ENCODE measurements at regions of chr18 and their contacts with region 1.

Region 1: GRCh38 chr18:55405893-55406406 is 182.0 kb downstream of the TCF4 start:
- DNase-seq: peak; percentile 97
- H3K4me3 ChIP-seq: no peak overlapping the region
- H3K27ac ChIP-seq: peak overlapping the region; percentile 73
- H3K4me1 ChIP-seq: peaks cover 48% of the 10 kb centered on the region
- H3K27me3 ChIP-seq: no peaks in the 10 kb centered on the region
- CTCF ChIP-seq: peak in 1 of 2 donors; percentile 20
- POLR2A ChIP-seq: no peak

Region 2: GRCh38 chr18:55110436-55110835 is 295.5 kb before region 1 on chr18:
- CTCF ChIA-PET with region 1: no interaction called
- POLR2A ChIA-PET with region 1: no interaction called
- dilution Hi-C with region 1: no loop called
- intact Hi-C with region 1: loop called (anchors 1 kb)
- DNase-seq: peak; percentile 73
- H3K4me3 ChIP-seq: no peak overlapping the region
- H3K27ac ChIP-seq: peak overlapping the region; percentile 90
- H3K4me1 ChIP-seq: peaks cover 23% of the 10 kb centered on the region
- H3K27me3 ChIP-seq: no peaks in the 10 kb centered on the region
- CTCF ChIP-seq: no peak
- POLR2A ChIP-seq: peak; percentile 35

Region 3: DNA sequence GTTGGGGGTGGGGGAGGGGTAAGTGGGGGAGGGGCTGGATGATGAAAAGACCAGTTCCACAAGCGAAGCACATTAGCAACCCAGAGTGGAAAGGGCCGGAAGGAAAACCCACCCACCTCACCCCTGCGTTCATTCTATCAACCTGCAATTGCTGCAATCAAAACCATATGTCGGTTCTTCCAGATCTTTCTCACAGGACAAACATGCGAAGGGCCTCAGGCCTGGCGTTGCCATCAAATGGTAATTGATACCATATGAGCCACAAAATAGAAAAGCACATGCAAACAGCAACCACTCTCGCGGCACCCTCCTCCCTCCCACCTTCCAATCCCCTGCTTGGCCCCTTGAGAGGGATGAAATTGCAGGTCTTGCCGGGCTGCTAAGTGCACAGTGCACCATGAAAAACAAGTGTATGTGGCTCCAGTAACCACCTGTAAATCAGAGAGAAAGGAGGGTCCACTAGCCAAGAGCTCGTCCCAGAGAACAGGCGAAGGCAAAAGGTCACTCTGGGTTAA is 105.5 kb before region 1 on chr18:
- CTCF ChIA-PET with region 1: no interaction called
- POLR2A ChIA-PET with region 1: no interaction called
- dilution Hi-C with region 1: no loop called
- intact Hi-C with region 1: no loop called
- DNase-seq: no peak
- H3K4me3 ChIP-seq: no peak overlapping the region
- H3K27ac ChIP-seq: no peak overlapping the region
- H3K4me1 ChIP-seq: no peaks in the 10 kb centered on the region
- H3K27me3 ChIP-seq: no peaks in the 10 kb centered on the region
- CTCF ChIP-seq: no peak
- POLR2A ChIP-seq: no peak

Region 4: GRCh38 chr18:55322178-55322735 is 83.7 kb before region 1 on chr18:
- CTCF ChIA-PET with region 1: interaction called, 10 read pairs
- POLR2A ChIA-PET with region 1: interaction called, 7 read pairs
- dilution Hi-C with region 1: no loop called
- intact Hi-C with region 1: loop called (anchors 1 kb)
- DNase-seq: peak; percentile 96
- H3K4me3 ChIP-seq: peak overlapping the region; percentile 28 to 89 (median 52)
- H3K27ac ChIP-seq: peak overlapping the region; percentile 82
- H3K4me1 ChIP-seq: peaks cover 66% of the 10 kb centered on the region
- H3K27me3 ChIP-seq: no peaks in the 10 kb centered on the region
- CTCF ChIP-seq: peak; percentile 4 to 20
- POLR2A ChIP-seq: no peak

Region 5: DNA sequence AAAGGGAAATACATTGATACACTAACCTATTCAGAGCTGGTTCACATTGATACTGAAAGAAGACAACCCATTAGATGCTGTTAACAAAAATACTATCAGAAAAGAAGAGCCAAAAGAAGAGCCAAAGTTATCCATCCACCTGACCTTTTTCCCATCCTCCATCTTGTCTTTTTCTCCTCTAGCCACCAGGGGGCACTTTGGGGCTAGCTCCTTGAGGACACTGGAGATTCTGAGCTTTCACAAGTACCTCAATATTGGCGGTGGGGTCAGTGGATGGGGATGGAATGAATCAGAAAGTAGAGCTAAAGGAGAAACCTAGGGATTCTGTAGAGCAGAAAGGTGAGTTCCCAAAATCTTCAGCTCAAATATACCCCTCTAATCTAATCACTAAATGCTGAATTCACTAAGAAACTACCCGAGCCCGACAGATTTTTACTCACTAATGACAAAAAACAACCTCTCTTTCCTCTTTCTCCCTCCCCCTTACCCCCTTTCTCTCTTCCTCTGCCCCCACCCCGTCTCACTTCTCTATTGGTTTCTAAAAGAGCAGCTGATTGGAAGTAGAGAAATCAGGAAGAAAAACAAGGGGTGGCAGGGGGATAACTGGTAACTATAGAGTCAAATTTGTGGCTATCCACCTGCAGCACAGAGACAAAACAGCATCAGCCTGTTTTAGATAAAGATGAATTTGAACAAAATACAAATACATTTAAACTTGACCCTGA is 21.2 kb before region 1 on chr18:
- CTCF ChIA-PET with region 1: interaction called, 15 read pairs
- POLR2A ChIA-PET with region 1: interaction called, 11 read pairs
- dilution Hi-C with region 1: no loop called
- intact Hi-C with region 1: loop called (anchors 1 kb)
- DNase-seq: peak; percentile 67
- H3K4me3 ChIP-seq: no peak overlapping the region
- H3K27ac ChIP-seq: no peak overlapping the region
- H3K4me1 ChIP-seq: peaks cover 39% of the 10 kb centered on the region
- H3K27me3 ChIP-seq: no peaks in the 10 kb centered on the region
- CTCF ChIP-seq: peak; percentile 69 to 74
- POLR2A ChIP-seq: no peak

Region 6: GRCh38 chr18:56083097-56083521 is 677.2 kb after region 1 on chr18:
- CTCF ChIA-PET with region 1: no interaction called
- POLR2A ChIA-PET with region 1: interaction called, 4 read pairs
- dilution Hi-C with region 1: no loop called
- intact Hi-C with region 1: loop called (anchors 5 kb)
- DNase-seq: peak; percentile 99
- H3K4me3 ChIP-seq: no peak overlapping the region
- H3K27ac ChIP-seq: peak overlapping the region; percentile 95
- H3K4me1 ChIP-seq: peaks cover 26% of the 10 kb centered on the region
- H3K27me3 ChIP-seq: no peaks in the 10 kb centered on the region
- CTCF ChIP-seq: peak; percentile 24 to 46
- POLR2A ChIP-seq: peak; percentile 71

Measured in endothelial cell of umbilical vein (primary cell).